ENCODE measurements at regions of chr4 and their contacts with region 1.

Region 1: DNA sequence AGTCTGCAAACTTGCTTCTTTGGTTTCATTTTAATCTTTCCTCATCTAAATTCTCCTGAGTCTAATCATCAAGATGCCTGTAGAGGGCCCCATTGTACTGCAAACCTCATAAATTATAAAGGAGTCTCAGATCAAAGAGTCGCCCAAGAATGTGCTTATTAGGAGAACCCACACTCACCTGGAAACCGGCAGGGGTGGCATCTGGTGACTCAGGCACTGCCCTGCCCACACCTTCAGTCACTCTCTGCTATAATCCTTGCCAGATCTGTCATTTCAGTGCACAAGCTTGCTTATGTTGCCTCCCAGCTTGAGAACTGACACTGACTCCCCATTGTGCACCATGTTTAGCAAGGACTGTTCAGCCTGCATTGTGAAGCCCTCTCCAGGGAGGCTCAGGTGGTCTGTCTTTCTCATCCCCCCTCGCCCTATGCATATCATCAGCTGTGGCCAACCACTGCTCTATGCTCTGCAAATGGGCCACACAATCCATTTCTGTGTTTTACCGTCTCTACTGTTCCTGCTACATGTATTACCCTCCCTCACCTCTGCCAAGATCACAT is 12.4 kb downstream of the EPGN start:
- DNase-seq: peak; percentile 85 to 92 (median 92)
- H3K4me3 ChIP-seq: peak overlapping the region in 4 of 7 experiments; percentile 8 to 68 (median 44)
- H3K27ac ChIP-seq: peak overlapping the region in 1 of 2 experiments; percentile 29
- H3K4me1 ChIP-seq: peaks cover 4 to 78% (median 34%) of the 10 kb centered on the region in 4 experiments
- H3K27me3 ChIP-seq: no peaks in the 10 kb centered on the region

Region 2: DNA sequence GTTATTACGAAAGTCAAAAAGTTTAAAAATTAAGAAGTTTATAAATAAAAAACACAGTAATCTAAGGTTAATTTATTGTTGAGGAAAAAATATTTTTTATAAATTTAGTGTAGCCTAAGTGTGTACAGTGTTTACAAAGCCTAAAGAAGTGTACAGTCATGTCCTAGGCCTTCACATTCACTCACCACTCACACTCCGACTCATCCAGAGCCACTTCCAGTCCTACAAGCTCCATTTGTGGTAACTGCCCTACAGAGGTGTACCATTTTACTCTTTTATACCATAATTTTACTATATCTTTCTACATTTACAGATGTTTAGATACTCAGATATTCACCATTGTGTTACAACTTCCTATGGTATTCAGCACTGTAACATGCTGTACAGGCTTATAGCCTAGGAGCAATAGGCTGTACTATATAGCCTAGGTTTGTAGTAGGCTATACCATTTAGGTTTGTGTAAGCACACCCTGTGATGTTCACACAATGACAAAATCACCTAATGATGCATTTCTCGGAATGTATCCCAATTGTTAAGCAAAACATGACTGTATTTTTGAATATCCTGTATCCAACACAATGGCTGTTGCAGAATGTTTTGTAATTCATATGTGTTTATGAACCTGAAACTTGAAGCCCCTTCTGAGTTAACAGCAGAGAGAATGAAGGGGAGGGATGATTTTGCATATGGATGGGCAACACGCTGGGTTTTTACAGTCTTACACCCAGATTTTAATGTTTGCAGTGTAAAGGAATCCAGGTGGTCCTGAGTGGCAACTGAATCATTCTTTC is 335.7 kb before region 1 on chr4:
- CTCF ChIA-PET with region 1: no interaction called
- POLR2A ChIA-PET with region 1: no interaction called
- DNase-seq: no peak
- H3K4me3 ChIP-seq: no peak overlapping the region
- H3K27ac ChIP-seq: no peak overlapping the region
- H3K4me1 ChIP-seq: peaks cover 0 to 23% (median 10%) of the 10 kb centered on the region in 4 experiments
- H3K27me3 ChIP-seq: no peaks in the 10 kb centered on the region

Region 3: DNA sequence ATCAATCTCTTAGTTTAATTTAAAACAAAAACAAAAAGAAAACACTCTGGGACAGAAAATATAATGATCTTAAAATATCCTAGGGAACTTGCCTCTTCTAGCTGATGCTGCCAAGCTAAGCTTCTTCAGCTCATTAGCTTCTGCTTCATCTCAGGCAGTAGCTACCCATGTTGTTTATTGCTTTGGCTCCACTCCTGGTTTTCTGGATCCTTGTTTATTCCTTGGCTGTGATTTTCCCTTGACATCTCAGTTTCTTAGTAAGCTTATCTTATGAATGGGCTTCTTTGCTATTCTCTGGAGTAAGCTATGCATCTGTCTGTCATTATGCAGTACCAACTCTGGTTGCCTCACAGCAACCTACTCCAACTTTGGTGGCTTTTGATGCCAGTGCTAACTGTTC is 167.8 kb before region 1 on chr4:
- CTCF ChIA-PET with region 1: no interaction called
- POLR2A ChIA-PET with region 1: no interaction called
- DNase-seq: no peak
- H3K4me3 ChIP-seq: no peak overlapping the region
- H3K27ac ChIP-seq: no peak overlapping the region
- H3K4me1 ChIP-seq: peaks cover 2 to 14% (median 8%) of the 10 kb centered on the region in 4 experiments
- H3K27me3 ChIP-seq: no peaks in the 10 kb centered on the region

Region 4: GRCh38 chr4:74308215-74308614 is 12.4 kb before region 1 on chr4 and contains the start of gene EPGN:
- CTCF ChIA-PET with region 1: interaction called, 13 read pairs
- POLR2A ChIA-PET with region 1: no interaction called
- DNase-seq: no peak
- H3K4me3 ChIP-seq: peak within 1 kb of the TSS in 2 of 7 experiments; percentile 7 to 28
- H3K27ac ChIP-seq: peak within 1 kb of the TSS in 1 of 2 experiments; percentile 1
- H3K4me1 ChIP-seq: peaks cover 1 to 40% (median 9%) of the 10 kb centered on the region in 4 experiments
- H3K27me3 ChIP-seq: no peaks in the 10 kb centered on the region

Region 5: GRCh38 chr4:74364652-74365491 is 44.2 kb after region 1 on chr4 and contains the start of gene EREG:
- CTCF ChIA-PET with region 1: interaction called, 39 read pairs
- POLR2A ChIA-PET with region 1: interaction called, 4 read pairs
- DNase-seq: peak; percentile 83 to 97 (median 97)
- H3K4me3 ChIP-seq: peak within 1 kb of the TSS; percentile 46 to 94 (median 90)
- H3K27ac ChIP-seq: peak within 1 kb of the TSS; percentile 92 to 94
- H3K4me1 ChIP-seq: peaks cover 0 to 57% (median 20%) of the 10 kb centered on the region in 4 experiments
- H3K27me3 ChIP-seq: no peaks in the 10 kb centered on the region

Region 6: DNA sequence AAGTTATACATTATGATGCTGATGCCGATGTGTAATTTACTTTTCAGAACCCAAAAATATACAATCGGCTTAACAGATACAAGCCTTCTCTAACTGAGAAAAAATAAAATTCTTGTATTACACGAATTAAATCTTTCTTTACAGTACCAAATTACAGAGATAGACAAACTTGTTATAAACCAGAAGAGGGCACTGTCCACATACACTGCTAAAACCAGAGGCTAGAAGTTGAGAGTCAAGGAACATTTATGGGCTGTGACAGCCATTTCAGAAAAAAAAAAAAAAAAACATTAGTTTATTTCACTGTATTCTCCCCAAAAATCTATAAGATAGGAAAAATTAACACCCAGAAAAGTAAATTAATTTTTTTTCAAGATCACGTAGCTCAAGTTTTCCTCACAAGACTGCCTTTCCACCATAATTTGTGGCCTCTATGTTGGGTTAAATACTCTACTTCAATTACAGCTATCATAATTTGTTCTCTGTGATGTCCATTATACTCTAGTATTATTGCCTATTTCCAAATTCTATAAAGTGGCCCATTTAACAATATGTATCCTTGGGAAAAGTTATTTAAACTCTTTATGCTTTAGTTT is 56.3 kb after region 1 on chr4:
- CTCF ChIA-PET with region 1: interaction called, 60 read pairs
- POLR2A ChIA-PET with region 1: interaction called, 3 read pairs
- DNase-seq: peak; percentile 65 to 82 (median 81)
- H3K4me3 ChIP-seq: no peak overlapping the region
- H3K27ac ChIP-seq: peak overlapping the region in 1 of 2 experiments; percentile 5
- H3K4me1 ChIP-seq: peaks cover 0 to 24% (median 6%) of the 10 kb centered on the region in 4 experiments
- H3K27me3 ChIP-seq: no peaks in the 10 kb centered on the region

Region 7: DNA sequence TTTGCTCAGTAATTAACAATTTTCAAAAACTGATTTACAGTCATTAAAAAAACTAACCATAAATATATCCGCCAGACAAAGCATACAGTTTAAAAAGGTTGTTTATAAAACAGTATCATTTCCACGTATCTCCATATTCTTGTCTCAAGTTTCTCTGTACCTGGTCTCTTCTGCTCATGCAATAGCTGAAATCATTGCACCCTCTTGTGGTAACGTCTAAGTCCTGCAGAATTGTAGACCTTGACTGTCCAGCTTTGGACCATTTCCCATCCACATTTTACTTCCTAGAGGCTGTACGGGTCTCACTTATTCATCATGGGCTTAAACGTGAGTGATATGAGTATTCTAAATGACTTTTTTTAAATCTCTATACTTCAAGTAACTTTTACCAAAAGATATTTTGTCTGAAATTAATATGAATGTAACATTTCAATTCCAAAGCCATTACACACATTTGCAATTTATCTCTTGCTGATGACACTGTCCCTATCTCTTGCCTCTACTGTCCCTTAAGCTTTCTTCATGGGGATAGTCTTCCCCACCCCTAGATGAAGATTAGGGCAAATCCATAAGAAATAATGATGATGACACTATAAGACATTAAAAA is 355.1 kb after region 1 on chr4:
- CTCF ChIA-PET with region 1: interaction called, 158 read pairs
- POLR2A ChIA-PET with region 1: no interaction called
- DNase-seq: peak; percentile 65 to 77 (median 75)
- H3K4me3 ChIP-seq: no peak overlapping the region
- H3K27ac ChIP-seq: no peak overlapping the region
- H3K4me1 ChIP-seq: peaks cover 0 to 8% (median 4%) of the 10 kb centered on the region in 4 experiments
- H3K27me3 ChIP-seq: no peaks in the 10 kb centered on the region